Sciatic nerve (tissue), 2 donors: ENCODE measurements at regions of chr6 and their contacts with region 1.

Region 1: GRCh38 chr6:144908004-144908403 is 622.9 kb downstream of the UTRN start:
- DNase-seq: no peak
- ATAC-seq: no peak

Region 2: DNA sequence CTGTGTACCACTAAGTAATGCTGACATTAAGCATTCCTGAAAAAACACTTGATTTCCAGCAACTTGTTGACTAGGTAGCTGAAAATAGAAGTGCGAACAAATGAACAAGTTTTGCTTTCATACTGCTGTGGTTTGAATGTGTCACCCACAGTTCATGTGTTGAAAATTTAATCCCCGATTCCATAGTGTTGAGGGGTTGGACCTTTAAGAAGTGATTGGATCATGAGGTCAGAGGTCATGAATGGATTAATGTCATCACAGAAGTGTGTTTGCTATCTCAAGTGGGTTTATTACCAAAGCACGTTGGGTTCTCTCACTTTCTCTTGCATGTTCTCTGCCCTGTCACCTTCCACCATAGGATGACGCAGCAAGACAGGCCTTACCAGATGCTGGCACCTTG is 54.4 kb before region 1 on chr6:
- intact Hi-C with region 1: no loop called
- DNase-seq: no peak
- ATAC-seq: no peak

Region 3: DNA sequence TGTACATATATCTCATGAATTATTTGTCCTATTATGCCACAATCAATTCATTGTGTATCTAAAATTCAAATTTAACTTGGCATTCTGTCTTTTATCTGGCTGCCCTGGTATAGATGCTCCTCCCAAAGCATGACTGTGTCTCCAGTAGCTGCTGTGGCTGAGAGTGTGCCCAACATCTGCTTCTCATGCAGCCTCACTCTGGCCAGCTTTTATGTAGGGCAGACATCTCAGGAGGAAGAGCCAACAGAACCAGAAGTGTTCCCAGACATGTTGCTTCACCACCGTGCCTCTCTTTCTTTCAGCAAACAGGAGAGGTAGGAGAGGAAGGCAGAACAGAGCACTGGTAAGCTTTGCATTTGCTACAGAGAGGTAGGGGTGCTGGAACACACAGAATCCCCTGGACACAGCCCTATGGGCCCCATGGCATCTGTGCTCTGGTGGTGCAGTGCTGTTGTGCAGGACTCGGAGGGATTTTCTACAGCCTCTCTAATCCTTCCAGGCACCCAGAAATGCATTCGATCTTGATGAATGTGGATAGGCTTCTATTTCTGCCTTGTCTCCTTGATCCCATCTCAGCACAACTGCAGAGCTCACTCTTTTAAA is 14.2 kb after region 1 on chr6:
- intact Hi-C with region 1: loop called (anchors 1 kb)
- DNase-seq: no peak
- ATAC-seq: peak; percentile 80